GM12878 (cell line): ENCODE measurements at regions of chrX and their contacts with region 1.

Region 1: GRCh38 chrX:590693-591404 is 39.7 kb upstream of the SHOX start:
- DNase-seq: no peak
- ATAC-seq: no peak
- H3K4me3 ChIP-seq: no peak overlapping the region
- H3K27ac ChIP-seq: no peak overlapping the region
- H3K4me1 ChIP-seq: no peaks in the 10 kb centered on the region
- H3K27me3 ChIP-seq: no peaks in the 10 kb centered on the region
- CTCF ChIP-seq: no peak
- EP300 ChIP-seq: no peak
- POLR2A ChIP-seq: no peak
- RAD21 ChIP-seq: no peak

Region 2: DNA sequence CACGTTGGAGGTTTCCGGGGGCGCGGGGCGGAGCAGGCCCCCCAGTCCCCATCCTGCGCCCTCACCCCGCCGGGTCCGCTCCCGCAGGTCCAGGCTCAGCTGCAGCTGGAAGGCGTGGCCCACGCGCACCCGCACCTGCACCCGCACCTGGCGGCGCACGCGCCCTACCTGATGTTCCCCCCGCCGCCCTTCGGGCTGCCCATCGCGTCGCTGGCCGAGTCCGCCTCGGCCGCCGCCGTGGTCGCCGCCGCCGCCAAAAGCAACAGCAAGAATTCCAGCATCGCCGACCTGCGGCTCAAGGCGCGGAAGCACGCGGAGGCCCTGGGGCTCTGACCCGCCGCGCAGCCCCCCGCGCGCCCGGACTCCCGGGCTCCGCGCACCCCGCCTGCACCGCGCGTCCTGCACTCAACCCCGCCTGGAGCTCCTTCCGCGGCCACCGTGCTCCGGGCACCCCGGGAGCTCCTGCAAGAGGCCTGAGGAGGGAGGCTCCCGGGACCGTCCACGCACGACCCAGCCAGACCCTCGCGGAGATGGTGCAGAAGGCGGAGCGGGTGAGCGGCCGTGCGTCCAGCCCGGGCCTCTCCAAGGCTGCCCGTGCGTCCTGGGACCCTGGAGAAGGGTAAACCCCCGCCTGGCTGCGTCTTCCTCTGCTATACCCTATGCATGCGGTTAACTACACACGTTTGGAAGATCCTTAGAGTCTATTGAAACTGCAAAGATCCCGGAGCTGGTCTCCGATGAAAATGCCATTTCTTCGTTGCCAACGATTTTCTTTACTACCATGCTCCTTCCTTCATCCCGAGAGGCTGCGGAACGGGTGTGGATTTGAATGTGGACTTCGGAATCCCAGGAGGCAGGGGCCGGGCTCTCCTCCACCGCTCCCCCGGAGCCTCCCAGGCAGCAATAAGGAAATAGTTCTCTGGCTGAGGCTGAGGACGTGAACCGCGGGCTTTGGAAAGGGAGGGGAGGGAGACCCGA is 53.7 kb after region 1 on chrX:
- CTCF ChIA-PET with region 1: no interaction called
- POLR2A ChIA-PET with region 1: no interaction called
- RAD21 ChIA-PET with region 1: no interaction called
- SMC1A ChIA-PET with region 1: no interaction called
- in situ Hi-C with region 1: loop called (anchors 5 kb)
- intact Hi-C with region 1: no loop called
- DNase-seq: no peak
- ATAC-seq: no peak
- H3K4me3 ChIP-seq: no peak overlapping the region
- H3K27ac ChIP-seq: no peak overlapping the region
- H3K4me1 ChIP-seq: no peaks in the 10 kb centered on the region
- H3K27me3 ChIP-seq: no peaks in the 10 kb centered on the region
- CTCF ChIP-seq: no peak
- EP300 ChIP-seq: no peak
- POLR2A ChIP-seq: no peak
- RAD21 ChIP-seq: no peak